Activated naive CD4-positive, alpha-beta T cell treated with anti-CD3 and anti-CD28 coated beads for 36 hours (primary cell): ENCODE measurements at regions of chr6 and their contacts with region 1.

Region 1: DNA sequence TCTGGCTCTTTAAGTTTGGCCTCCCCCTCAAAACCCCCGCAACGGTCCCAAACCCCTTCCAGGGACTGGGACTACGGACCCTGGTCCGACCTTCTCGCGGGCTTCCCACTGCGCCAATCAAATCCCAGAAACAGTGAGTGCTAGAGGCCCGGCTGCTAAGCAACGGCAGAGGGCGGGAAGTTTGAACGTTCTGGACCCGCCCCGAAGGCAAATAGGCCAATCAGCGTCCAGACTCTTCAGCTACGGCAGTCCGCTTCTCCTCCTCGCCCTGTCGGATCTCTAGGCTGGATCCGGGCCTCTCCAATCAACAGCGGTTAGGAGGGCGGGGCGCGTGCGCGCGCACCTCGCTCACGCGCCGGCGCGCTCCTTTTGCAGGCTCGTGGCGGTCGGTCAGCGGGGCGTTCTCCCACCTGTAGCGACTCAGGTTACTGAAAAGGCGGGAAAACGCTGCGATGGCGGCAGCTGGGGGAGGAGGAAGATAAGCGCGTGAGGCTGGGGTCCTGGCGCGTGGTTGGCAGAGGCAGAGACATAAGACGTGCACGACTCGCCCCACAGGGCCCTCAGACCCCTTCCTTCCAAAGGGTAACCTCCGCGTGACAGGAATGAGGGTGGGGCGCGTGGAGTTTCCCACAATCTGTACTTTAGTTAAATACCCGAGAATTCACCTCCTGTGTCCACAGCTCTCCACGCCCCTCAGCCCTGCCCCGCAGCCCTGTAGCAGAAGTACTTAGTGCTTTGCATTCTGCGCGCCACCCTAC is at the start of gene MSH5:
- DNase-seq: peak; percentile 99
- H3K4me3 Mint-ChIP-seq: peak within 1 kb of the TSS; percentile 95
- H3K27ac Mint-ChIP-seq: peak within 1 kb of the TSS; percentile 93
- H3K4me1 Mint-ChIP-seq: peaks cover 45% of the 10 kb centered on the region
- H3K27me3 Mint-ChIP-seq: no peaks in the 10 kb centered on the region
- total RNA-seq, gene MSH5: 101 to 105 TPM

Region 2: GRCh38 chr6:31143148-31143547 is 596.7 kb before region 1 on chr6:
- CTCF ChIA-PET with region 1: no interaction called
- intact Hi-C with region 1: no loop called
- DNase-seq: no peak
- H3K4me3 Mint-ChIP-seq: no peak overlapping the region
- H3K27ac Mint-ChIP-seq: no peak overlapping the region
- H3K4me1 Mint-ChIP-seq: no peaks in the 10 kb centered on the region
- H3K27me3 Mint-ChIP-seq: no peaks in the 10 kb centered on the region

Region 3: DNA sequence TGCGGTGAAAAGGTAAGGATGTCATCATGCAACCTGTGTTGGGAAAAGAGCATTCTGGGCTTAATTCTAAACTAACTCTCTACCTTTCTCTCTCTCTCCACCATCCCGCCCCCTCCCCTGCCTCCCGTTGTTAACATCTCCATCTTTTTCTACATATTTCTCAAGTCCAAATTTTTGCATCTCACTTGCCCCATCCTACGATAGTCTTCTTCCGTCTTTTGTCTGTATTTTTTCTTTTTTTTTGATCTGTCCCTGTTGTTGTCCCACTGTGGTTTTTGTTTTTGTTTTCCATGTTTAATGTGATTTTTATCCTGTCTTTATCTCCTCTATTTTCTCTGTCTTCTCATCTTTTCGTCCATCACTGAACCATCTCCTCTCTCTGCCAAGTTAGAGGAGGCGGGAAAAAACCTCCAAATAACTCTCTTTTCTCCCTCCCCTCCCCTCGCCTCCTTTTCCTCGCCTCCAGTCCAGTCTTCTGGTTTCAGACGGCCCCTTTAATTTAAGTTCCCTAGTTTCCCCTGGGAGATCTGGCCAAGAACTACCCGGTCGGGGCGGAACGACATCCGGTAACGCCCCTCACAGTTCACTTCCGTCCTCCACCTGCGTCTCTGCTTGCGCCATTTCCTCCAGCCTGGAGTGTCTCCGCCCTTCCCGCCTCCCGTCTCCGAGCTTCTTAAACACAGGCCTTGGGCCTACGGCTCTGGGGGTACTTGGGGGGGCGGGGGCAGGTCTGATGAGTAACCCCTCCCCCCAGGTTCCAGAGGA is 192.7 kb before region 1 on chr6 and contains the start of gene NFKBIL1:
- CTCF ChIA-PET with region 1: no interaction called
- intact Hi-C with region 1: loop called (anchors 1 kb)
- DNase-seq: peak; percentile 96
- H3K4me3 Mint-ChIP-seq: peak within 1 kb of the TSS; percentile 88
- H3K27ac Mint-ChIP-seq: peak within 1 kb of the TSS; percentile 94
- H3K4me1 Mint-ChIP-seq: peaks cover 43% of the 10 kb centered on the region
- H3K27me3 Mint-ChIP-seq: no peaks in the 10 kb centered on the region
- total RNA-seq, gene NFKBIL1: 20.4 to 20.6 TPM

Region 4: GRCh38 chr6:31652925-31653718 is 86.7 kb before region 1 on chr6:
- CTCF ChIA-PET with region 1: interaction called, 7 read pairs
- intact Hi-C with region 1: loop called (anchors 1 kb)
- DNase-seq: peak; percentile 92
- H3K4me3 Mint-ChIP-seq: peak overlapping the region; percentile 96
- H3K27ac Mint-ChIP-seq: peak overlapping the region; percentile 98
- H3K4me1 Mint-ChIP-seq: peaks cover 44% of the 10 kb centered on the region
- H3K27me3 Mint-ChIP-seq: no peaks in the 10 kb centered on the region

Region 5: DNA sequence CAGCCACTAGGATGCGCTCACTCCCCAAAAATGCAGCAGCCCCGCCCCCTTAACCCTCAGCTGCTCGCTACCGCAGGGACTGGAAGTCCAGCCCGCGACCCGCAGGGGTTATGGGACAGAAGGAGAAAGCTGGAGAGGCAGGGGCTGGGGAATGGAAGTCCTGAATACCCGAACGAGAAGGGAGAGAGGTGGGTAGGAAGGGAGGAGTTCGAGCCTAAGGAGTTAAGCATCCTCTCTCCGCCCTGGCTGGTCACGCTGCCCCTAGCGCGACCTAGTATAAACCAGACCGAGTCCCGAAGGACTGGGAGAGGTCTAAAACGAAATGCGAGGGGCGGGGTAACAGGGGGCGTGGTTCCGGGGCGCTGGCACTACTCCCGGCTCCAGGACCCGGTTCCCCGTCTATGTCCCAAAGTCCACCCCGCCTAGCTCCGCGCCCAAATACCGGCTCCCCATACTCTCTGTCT is 10.3 kb before region 1 on chr6:
- CTCF ChIA-PET with region 1: interaction called, 22 read pairs
- intact Hi-C with region 1: loop called (anchors 1 kb)
- DNase-seq: peak; percentile 81
- H3K4me3 Mint-ChIP-seq: peak overlapping the region; percentile 79
- H3K27ac Mint-ChIP-seq: peak overlapping the region; percentile 72
- H3K4me1 Mint-ChIP-seq: peaks cover 59% of the 10 kb centered on the region
- H3K27me3 Mint-ChIP-seq: no peaks in the 10 kb centered on the region

Region 6: DNA sequence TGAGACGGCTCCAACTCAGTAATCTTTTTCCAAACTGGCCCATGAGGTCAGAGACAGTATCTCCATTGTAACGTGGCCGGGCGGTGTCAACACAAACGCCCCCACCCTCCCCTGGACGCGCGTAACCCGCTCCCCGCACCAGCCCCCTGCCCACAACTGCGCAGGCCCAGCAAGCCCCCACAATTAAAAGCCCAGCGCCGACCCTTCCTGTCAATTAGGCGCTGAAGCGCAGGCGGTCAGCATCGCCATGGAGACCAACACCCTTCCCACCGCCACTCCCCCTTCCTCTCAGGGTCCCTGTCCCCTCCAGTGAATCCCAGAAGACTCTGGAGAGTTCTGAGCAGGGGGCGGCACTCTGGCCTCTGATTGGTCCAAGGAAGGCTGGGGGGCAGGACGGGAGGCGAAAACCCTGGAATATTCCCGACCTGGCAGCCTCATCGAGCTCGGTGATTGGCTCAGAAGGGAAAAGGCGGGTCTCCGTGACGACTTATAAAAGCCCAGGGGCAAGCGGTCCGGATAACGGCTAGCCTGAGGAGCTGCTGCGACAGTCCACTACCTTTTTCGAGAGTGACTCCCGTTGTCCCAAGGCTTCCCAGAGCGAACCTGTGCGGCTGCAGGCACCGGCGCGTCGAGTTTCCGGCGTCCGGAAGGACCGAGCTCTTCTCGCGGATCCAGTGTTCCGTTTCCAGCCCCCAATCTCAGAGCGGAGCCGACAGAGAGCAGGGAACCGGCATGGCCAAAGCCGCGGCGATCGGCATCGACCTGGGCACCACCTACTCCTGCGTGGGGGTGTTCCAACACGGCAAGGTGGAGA is 75.4 kb after region 1 on chr6 and contains the starts of genes HSPA1A and HSPA1L:
- CTCF ChIA-PET with region 1: interaction called, 3 read pairs
- intact Hi-C with region 1: loop called (anchors 2 kb)
- DNase-seq: peak; percentile 60
- H3K4me3 Mint-ChIP-seq: peak within 1 kb of the TSS; percentile 84
- H3K27ac Mint-ChIP-seq: peak within 1 kb of the TSS; percentile 96
- H3K4me1 Mint-ChIP-seq: peaks cover 54% of the 10 kb centered on the region
- H3K27me3 Mint-ChIP-seq: no peaks in the 10 kb centered on the region
- total RNA-seq, gene HSPA1A: 19.8 to 23.1 TPM
- total RNA-seq, gene HSPA1L: 0.86 to 0.95 TPM

Region 7: GRCh38 chr6:31901953-31902643 is 162.3 kb after region 1 on chr6 and contains the start of gene ZBTB12:
- CTCF ChIA-PET with region 1: interaction called, 3 read pairs
- intact Hi-C with region 1: loop called (anchors 5 kb)
- DNase-seq: peak; percentile 87
- H3K4me3 Mint-ChIP-seq: peak within 1 kb of the TSS; percentile 82
- H3K27ac Mint-ChIP-seq: peak within 1 kb of the TSS; percentile 81
- H3K4me1 Mint-ChIP-seq: peaks cover 29% of the 10 kb centered on the region
- H3K27me3 Mint-ChIP-seq: no peaks in the 10 kb centered on the region
- total RNA-seq, gene ZBTB12: 0.57 to 0.69 TPM

Region 8: DNA sequence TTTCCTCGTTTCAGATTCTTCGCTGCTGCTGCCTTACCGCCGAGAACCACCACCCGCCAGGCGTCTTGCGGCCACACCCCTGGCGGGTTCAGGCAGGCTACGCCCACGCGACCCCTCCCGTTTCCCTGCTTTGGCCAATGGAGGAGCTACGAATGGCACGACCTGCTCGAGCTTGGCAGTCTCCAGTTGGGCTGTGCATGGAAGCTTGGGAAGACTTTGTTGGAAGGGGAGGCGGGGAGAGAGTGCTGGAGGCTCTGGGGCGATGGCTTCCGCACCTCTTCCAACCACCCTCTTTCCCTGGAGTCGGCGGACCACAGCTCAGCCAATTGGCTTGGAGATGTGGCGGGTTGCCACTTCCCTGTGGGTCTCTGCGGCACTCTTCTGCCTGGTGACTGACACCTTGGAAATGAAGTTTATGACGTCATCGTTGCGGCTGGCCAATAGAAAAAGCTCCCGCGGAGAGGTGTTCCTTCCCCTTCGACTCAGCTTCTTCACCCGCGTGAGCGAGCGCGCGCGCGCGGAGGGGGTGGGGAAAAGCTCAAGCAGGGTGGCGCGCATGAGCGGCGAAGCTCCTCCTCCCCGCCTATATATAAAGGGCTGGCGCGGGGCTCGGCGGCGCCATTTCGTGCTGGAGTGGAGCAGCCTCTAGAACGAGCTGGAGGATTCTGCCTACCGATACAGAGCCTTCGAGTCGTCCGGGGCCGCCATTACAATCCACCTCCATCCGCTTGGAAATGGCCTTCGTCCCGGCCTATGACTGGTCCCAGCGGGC is 1231.9 kb after region 1 on chr6:
- CTCF ChIA-PET with region 1: no interaction called
- intact Hi-C with region 1: loop called (anchors 2 kb)
- DNase-seq: peak; percentile 100
- H3K4me3 Mint-ChIP-seq: peak overlapping the region; percentile 93
- H3K27ac Mint-ChIP-seq: peak overlapping the region; percentile 100
- H3K4me1 Mint-ChIP-seq: peaks cover 24% of the 10 kb centered on the region
- H3K27me3 Mint-ChIP-seq: no peaks in the 10 kb centered on the region